Heart left ventricle (tissue), 16 donors: ENCODE measurements at regions of chr1 and their contacts with region 1.

Region 1: GRCh38 chr1:32933742-32934322 is 30.8 kb downstream of the RNF19B start:
- DNase-seq: peak in 1 of 5 donors; percentile 35
- ATAC-seq: peak in 3 of 4 donors; percentile 31 to 74 (median 63)
- H3K4me3 ChIP-seq: no peak overlapping the region
- H3K27ac ChIP-seq: peak overlapping the region in 9 of 12 donors; percentile 2 to 56 (median 45)
- H3K4me1 ChIP-seq: peaks cover 0 to 34% (median 11%) of the 10 kb centered on the region in 12 donors
- H3K27me3 ChIP-seq: no peaks in the 10 kb centered on the region
- CTCF ChIP-seq: peak in 1 of 12 donors; percentile 6
- POLR2A ChIP-seq: no peak

Region 2: GRCh38 chr1:32817159-32817814 is 116.5 kb before region 1 on chr1 and contains the starts of genes S100PBP and YARS1:
- intact Hi-C with region 1: no loop called
- DNase-seq: peak; percentile 99 to 100 (median 100)
- ATAC-seq: peak; percentile 97 to 99 (median 98)
- H3K4me3 ChIP-seq: peak within 1 kb of the TSS; percentile 76 to 99 (median 88)
- H3K27ac ChIP-seq: peak within 1 kb of the TSS; percentile 94 to 99 (median 98)
- H3K4me1 ChIP-seq: peaks cover 5 to 59% (median 31%) of the 10 kb centered on the region in 12 donors
- H3K27me3 ChIP-seq: no peaks in the 10 kb centered on the region
- CTCF ChIP-seq: peak in 3 of 12 donors; percentile 5 to 10 (median 10)
- POLR2A ChIP-seq: peak in 1 of 2 donors; percentile 64
- total RNA-seq, gene S100PBP: 9.1 to 21.2 (median 10.7) TPM
- total RNA-seq, gene YARS1: 20.2 to 58.1 (median 34.8) TPM

Region 3: DNA sequence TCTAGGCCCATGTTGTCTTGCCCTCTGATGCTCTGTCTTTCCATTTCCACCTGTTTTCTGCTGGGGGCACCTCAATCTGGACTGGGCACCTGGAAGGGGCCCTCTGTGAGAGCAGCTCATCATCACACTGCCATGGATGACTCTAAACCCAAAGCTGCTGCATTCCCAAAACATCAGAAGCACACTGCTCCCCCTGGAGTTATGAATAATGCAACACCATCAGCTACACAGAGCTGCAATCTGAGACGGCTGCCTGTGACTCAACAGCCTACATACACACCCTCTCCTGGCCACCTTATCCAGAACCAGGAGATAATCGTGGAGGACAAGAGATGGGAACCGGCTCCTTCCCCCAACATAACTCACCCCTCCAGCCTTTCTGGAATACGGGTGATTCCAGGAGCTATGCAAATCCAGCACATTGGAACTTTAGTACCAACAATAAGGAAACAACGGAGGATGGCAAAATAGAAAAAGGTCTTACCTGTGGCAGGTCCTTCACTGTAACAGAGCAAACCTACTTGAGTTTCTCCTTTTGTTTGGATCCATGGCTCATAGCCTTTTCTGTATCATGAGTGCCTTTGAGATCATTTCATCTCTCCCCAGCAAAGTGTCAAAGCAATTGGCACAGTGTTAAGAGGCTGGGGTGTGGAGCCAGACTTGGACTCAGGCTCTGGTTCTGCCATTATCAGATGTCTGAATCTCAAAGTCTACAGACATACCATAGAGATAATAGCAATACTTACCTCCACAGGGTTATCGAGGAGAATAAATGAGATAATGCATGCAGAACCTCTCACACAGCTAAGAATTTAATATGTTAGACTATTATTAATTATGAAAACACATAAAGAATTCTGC is 73.6 kb after region 1 on chr1:
- intact Hi-C with region 1: loop called in 7 of 10 experiments (anchors 5 to 10 kb)
- DNase-seq: peak in 3 of 5 donors; percentile 38 to 59 (median 50)
- ATAC-seq: peak; percentile 43 to 80 (median 67)
- H3K4me3 ChIP-seq: no peak overlapping the region
- H3K27ac ChIP-seq: peak overlapping the region in 3 of 12 donors; percentile 27 to 91 (median 84)
- H3K4me1 ChIP-seq: peaks cover 10 to 85% (median 62%) of the 10 kb centered on the region in 12 donors
- H3K27me3 ChIP-seq: no peaks in the 10 kb centered on the region
- CTCF ChIP-seq: peak in 11 of 12 donors; percentile 13 to 52 (median 33)
- POLR2A ChIP-seq: no peak

Region 4: GRCh38 chr1:33055210-33056008 is 121.6 kb after region 1 on chr1:
- intact Hi-C with region 1: loop called (anchors 1 to 5 kb)
- DNase-seq: peak; percentile 83 to 94 (median 87)
- ATAC-seq: peak; percentile 90 to 98 (median 96)
- H3K4me3 ChIP-seq: no peak overlapping the region
- H3K27ac ChIP-seq: peak overlapping the region in 11 of 12 donors; percentile 17 to 70 (median 51)
- H3K4me1 ChIP-seq: peaks cover 0 to 22% (median 13%) of the 10 kb centered on the region in 12 donors
- H3K27me3 ChIP-seq: no peaks in the 10 kb centered on the region
- CTCF ChIP-seq: peak; percentile 67 to 83 (median 74)
- POLR2A ChIP-seq: no peak

Region 5: DNA sequence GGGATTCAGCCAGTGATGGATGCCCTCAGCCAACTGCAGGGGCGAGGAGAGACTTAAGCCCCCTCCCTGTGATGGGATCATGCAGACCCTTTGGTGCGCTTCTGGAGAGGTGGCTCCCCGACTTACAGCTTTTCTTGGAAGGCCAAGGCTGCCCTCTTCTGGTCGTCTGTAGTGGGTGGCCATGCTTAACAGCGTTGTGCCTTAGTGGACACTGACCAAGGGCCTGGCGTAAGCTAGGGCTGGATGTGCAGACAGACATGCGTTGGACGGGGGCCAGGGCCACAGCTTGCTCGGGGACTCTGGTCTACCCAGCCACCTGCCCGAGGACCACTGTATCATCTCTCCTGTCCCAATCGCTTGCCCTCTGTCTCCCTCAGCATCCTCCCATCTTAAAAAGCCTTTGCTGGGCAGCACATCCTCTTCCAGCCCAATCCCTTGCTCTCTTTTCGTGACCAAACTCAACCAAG is 152.6 kb after region 1 on chr1:
- intact Hi-C with region 1: loop called (anchors 1 to 10 kb)
- DNase-seq: peak; percentile 74 to 84 (median 77)
- ATAC-seq: peak; percentile 66 to 89 (median 86)
- H3K4me3 ChIP-seq: no peak overlapping the region
- H3K27ac ChIP-seq: no peak overlapping the region
- H3K4me1 ChIP-seq: peaks cover 0 to 23% (median 4%) of the 10 kb centered on the region in 12 donors
- H3K27me3 ChIP-seq: peaks cover 0 to 7% (median 0%) of the 10 kb centered on the region in 9 donors
- CTCF ChIP-seq: peak; percentile 66 to 86 (median 77)
- POLR2A ChIP-seq: no peak